GM10248 (cell line): ENCODE measurements at regions of chr14 and their contacts with region 1.

Region 1: GRCh38 chr14:67526676-67527459 is 6.2 kb upstream of the PLEKHH1 start:
- DNase-seq: peak; percentile 53
- CTCF ChIP-seq: peak; percentile 53

Region 2: GRCh38 chr14:67352055-67352454 is 174.8 kb before region 1 on chr14:
- CTCF ChIA-PET with region 1: no interaction called
- POLR2A ChIA-PET with region 1: no interaction called
- DNase-seq: no peak
- CTCF ChIP-seq: no peak

Region 3: DNA sequence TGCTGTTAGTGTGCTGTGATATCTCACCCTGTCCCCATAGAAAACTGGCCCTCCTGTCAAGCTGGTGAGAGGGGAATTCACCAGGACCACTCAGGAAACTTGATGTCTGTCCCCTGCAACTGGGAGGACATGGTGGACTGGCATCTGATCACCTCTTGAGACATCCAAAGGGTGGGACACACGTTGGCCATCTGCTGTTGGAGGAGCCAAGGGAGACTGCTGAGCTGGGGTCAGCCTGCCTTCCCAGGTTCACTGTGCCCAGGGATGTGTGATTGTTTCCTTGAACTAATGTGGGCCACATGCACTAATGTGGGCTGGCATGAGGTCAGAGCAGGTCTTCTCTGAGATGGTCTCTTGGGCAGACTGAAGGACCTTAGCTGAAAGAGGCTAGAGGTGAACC is 21.6 kb before region 1 on chr14:
- CTCF ChIA-PET with region 1: interaction called, 13 read pairs
- POLR2A ChIA-PET with region 1: no interaction called
- DNase-seq: no peak
- CTCF ChIP-seq: no peak

Region 4: DNA sequence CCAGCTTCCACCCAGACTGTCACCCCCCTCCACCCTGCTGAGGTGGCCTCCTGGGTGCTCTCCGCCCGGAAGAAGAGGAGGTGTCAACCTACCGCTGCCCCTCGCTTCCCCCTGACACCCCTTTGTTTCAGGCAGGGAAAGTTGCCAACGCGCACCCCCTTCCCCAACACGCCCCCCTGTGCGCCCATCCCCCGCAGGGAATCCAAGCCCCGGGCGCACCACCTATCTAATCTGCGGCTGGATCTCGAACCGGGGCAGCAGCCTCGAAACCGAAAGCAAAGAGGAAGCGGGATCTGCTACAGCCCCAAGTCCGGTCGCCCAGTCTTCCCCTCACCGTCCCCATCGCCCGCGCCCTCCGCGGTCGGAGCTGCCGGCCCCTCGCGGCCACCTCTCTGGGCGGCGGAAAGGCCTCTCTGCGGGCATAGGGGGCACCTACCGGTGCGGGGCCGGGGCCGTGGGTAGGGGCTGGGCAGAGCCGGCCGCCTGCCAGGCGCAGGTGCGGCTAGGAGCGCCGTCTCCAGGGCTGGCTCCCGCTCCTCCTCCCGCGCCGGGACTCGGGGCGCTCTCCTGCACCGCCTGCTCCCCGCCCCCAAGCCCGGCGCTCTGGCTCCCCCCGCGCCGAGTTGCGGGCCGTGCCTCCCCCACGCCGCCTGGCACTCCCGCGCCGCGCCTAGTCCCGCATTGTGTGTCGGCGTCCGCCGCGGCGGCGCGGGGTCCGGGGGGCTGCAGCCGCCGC is 12.1 kb before region 1 on chr14:
- CTCF ChIA-PET with region 1: interaction called, 21 read pairs
- POLR2A ChIA-PET with region 1: no interaction called
- DNase-seq: peak; percentile 62
- CTCF ChIP-seq: no peak

Region 5: DNA sequence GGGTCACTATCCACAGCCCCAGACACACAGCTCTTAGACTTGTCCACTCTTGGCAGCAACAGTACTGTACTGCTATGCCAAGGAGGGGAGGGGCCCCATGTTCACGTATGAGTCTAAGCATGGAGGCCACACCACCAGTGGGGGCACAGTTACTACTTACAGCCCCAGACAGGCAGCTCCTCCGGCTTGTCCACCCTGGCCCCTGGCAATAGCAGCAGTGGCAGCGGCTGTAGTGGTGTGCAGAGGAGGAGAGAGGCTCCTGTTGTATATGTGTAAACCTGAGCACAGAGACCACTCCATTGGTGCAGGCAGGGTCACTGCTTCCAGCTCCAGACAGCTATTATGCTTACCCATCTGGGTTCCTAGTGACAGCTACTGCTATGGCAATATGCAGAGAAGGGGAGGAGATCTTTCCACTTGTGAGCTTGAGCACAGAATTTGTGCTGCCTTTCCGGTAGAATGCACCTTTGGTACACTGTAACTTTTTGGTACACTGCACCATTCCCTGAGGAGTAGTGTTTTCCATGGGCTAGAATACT is 405.9 kb after region 1 on chr14:
- CTCF ChIA-PET with region 1: no interaction called
- POLR2A ChIA-PET with region 1: no interaction called
- DNase-seq: no peak
- CTCF ChIP-seq: no peak

Region 6: DNA sequence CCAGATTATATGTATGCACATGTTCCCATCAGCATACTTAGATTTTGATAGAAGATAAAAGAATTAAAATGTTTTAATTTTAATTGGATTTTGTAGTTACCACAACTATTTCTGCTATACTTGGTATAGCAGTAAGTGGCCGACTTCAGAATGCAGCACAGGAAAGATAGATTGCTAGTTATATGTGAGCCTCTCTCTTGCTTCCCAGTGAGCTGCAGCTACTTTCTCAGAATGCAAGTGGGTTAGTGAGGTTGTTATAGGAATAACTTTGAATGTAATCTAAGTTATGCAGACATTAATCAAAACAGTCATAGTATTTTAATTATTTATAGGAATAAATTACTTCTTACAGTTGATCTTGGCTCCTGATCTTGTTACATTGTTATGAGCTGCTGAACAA is 533.3 kb after region 1 on chr14:
- CTCF ChIA-PET with region 1: no interaction called
- POLR2A ChIA-PET with region 1: no interaction called
- DNase-seq: no peak
- CTCF ChIP-seq: no peak